ENCODE measurements at regions of chr3 and their contacts with region 1.

Region 1: DNA sequence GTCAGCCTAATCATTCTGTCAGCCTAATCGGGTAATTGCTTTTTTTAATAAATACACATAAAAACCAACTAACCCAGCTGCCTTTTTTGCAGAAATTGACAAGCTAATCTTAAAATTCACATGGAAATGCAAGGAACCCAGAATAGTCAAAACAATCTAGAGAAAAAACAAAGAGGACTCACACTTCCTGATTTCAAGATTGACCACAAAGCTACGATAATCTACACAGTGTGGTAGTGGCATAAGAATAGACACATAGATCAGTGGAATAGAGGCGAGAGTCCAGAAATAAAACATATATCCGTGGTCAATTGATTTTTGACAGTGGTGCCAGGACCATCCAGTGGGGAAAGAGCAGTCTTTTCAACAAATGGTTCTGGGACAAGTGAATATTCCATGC is 2.4 kb upstream of the C3orf20 start:
- DNase-seq: no peak
- ATAC-seq: no peak
- H3K4me3 ChIP-seq: no peak overlapping the region
- H3K27ac ChIP-seq: no peak overlapping the region
- H3K4me1 ChIP-seq: no peaks in the 10 kb centered on the region
- H3K27me3 ChIP-seq: no peaks in the 10 kb centered on the region
- CTCF ChIP-seq: no peak
- POLR2A ChIP-seq: no peak

Region 2: DNA sequence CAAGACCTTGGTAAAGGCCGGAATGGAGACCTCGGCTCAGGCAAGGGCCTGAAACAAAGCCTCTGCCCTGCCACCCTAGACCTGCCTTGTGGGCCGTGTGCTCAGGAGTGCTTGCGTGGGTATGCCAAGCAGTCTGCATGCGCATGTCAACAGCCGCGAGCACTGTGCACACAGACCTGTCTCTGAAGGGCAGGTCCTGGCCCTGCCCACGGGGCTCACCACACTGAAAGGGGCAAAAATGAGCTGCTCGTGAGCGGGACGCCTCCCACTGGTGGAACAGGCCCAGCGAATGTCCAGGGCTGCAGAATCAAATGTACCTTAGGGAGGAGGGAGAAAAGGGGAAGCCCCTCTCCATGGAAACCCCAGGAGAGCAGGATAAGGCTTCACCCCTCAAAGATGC is 101.8 kb after region 1 on chr3:
- intact Hi-C with region 1: loop called in 3 of 10 experiments (anchors 2 to 5 kb)
- DNase-seq: no peak
- ATAC-seq: no peak
- H3K4me3 ChIP-seq: no peak overlapping the region
- H3K27ac ChIP-seq: no peak overlapping the region
- H3K4me1 ChIP-seq: no peaks in the 10 kb centered on the region
- H3K27me3 ChIP-seq: no peaks in the 10 kb centered on the region
- CTCF ChIP-seq: no peak
- POLR2A ChIP-seq: no peak

Region 3: DNA sequence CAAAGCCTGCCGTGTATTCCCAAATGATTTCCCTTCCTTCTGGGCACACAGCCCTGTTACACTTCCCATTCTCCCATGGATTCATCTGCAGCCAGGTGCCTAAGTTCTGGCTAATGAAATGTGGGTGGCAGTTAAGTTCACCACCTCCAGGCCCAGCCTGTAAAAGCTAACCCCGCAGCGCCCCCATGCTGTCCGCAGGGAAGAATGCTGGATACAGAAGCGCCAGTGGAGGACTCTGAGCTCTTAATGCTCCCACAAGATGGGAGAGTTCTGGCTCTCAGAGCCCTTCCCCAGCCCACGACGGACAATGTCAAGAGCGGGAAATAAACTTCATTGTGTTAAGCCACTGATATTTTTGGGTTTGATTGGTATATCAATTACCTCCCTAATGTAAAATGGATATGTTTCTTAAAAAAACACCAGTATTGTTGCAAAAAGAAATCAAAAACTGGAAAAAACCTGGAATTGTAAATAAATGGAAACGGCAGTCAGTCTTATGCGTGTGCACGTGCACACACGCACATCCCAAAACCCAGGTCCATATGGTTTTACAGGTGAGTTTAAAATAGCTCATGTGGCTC is 108.4 kb after region 1 on chr3:
- intact Hi-C with region 1: loop called (anchors 1 to 5 kb)
- DNase-seq: peak in 4 of 5 donors; percentile 54 to 68 (median 56)
- ATAC-seq: peak; percentile 78 to 94 (median 87)
- H3K4me3 ChIP-seq: no peak overlapping the region
- H3K27ac ChIP-seq: no peak overlapping the region
- H3K4me1 ChIP-seq: peaks cover 0 to 12% (median 0%) of the 10 kb centered on the region in 12 donors
- H3K27me3 ChIP-seq: peaks cover 0 to 5% (median 0%) of the 10 kb centered on the region in 9 donors
- CTCF ChIP-seq: peak; percentile 31 to 75 (median 58)
- POLR2A ChIP-seq: no peak